Ovary (tissue), 10 donors: ENCODE measurements at regions of chr20 and their contacts with region 1.

Region 1: GRCh38 chr20:51595058-51595532 is 52.6 kb upstream of the NFATC2 start:
- DNase-seq: peak; percentile 88 to 91 (median 89)
- H3K4me3 ChIP-seq: no peak overlapping the region
- H3K27ac ChIP-seq: peak overlapping the region in 1 of 2 donors; percentile 64
- H3K4me1 ChIP-seq: peaks cover 2% of the 10 kb centered on the region
- H3K27me3 ChIP-seq: no peaks in the 10 kb centered on the region
- CTCF ChIP-seq: peak; percentile 79 to 93 (median 88)
- EP300 ChIP-seq: no peak
- POLR2A ChIP-seq: no peak

Region 2: GRCh38 chr20:50987592-50988210 is 607.4 kb before region 1 on chr20:
- intact Hi-C with region 1: loop called in 3 of 4 experiments (anchors 10 kb)
- DNase-seq: peak; percentile 54 to 72 (median 67)
- H3K4me3 ChIP-seq: no peak overlapping the region
- H3K27ac ChIP-seq: no peak overlapping the region
- H3K4me1 ChIP-seq: no peaks in the 10 kb centered on the region
- H3K27me3 ChIP-seq: no peaks in the 10 kb centered on the region
- CTCF ChIP-seq: peak; percentile 76 to 94 (median 76)
- EP300 ChIP-seq: no peak
- POLR2A ChIP-seq: no peak

Region 3: GRCh38 chr20:51372176-51372803 is 222.8 kb before region 1 on chr20:
- intact Hi-C with region 1: loop called (anchors 2 to 5 kb)
- DNase-seq: peak; percentile 68 to 82 (median 74)
- H3K4me3 ChIP-seq: no peak overlapping the region
- H3K27ac ChIP-seq: no peak overlapping the region
- H3K4me1 ChIP-seq: peaks cover 3% of the 10 kb centered on the region
- H3K27me3 ChIP-seq: no peaks in the 10 kb centered on the region
- CTCF ChIP-seq: peak; percentile 54 to 79 (median 77)
- EP300 ChIP-seq: no peak
- POLR2A ChIP-seq: no peak